GM12878 (cell line): ENCODE measurements at regions of chr6 and their contacts with region 1.

Region 1: GRCh38 chr6:34315780-34316179 is 67.0 kb upstream of the SMIM29 start:
- DNase-seq: peak; percentile 71
- ATAC-seq: peak; percentile 81
- H3K4me3 ChIP-seq: peak overlapping the region; percentile 37
- H3K27ac ChIP-seq: peak overlapping the region; percentile 84
- H3K4me1 ChIP-seq: peaks cover 43% of the 10 kb centered on the region
- H3K27me3 ChIP-seq: no peaks in the 10 kb centered on the region
- CTCF ChIP-seq: no peak
- EP300 ChIP-seq: peak; percentile 37 to 54; a peak in 2 of 4 replicates
- POLR2A ChIP-seq: no peak
- RAD21 ChIP-seq: no peak

Region 2: DNA sequence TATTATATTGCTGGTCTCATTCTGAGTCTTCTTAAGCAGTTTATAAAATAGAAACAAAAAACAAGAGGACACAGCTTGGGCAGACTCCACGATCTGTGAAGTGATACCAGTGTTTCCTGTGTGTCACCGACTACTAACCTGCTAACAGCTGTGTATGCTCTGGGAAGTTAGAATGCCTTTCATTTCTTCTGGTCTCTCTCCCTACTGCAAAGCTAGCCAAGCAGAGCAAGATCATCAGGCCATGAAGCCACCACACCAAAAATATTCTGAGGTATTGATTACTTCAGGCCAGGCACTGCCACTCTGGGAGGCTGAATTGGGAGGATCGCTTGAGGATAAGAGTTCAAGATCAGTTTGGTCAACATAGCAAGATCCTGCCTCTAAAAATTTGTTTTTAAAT is 20.1 kb before region 1 on chr6:
- CTCF ChIA-PET with region 1: interaction called, 16 read pairs
- POLR2A ChIA-PET with region 1: interaction called, 8 read pairs
- RAD21 ChIA-PET with region 1: interaction called, 9 read pairs
- SMC1A ChIA-PET with region 1: interaction called, 19 read pairs
- in situ Hi-C with region 1: no loop called
- intact Hi-C with region 1: no loop called
- DNase-seq: peak; percentile 95
- ATAC-seq: peak; percentile 95
- H3K4me3 ChIP-seq: 0 out of 2 replicates have a peak overlapping the region, but pooled peaks have one; percentile 4
- H3K27ac ChIP-seq: peak overlapping the region; percentile 76
- H3K4me1 ChIP-seq: peaks cover 40% of the 10 kb centered on the region
- H3K27me3 ChIP-seq: no peaks in the 10 kb centered on the region
- CTCF ChIP-seq: no peak
- EP300 ChIP-seq: no peak
- POLR2A ChIP-seq: no peak
- RAD21 ChIP-seq: no peak

Region 3: GRCh38 chr6:34301408-34301807 is 14.4 kb before region 1 on chr6:
- CTCF ChIA-PET with region 1: interaction called, 16 read pairs
- POLR2A ChIA-PET with region 1: interaction called, 8 read pairs
- RAD21 ChIA-PET with region 1: interaction called, 9 read pairs
- SMC1A ChIA-PET with region 1: interaction called, 26 read pairs
- in situ Hi-C with region 1: no loop called
- intact Hi-C with region 1: no loop called
- DNase-seq: no peak
- ATAC-seq: no peak
- H3K4me3 ChIP-seq: no peak overlapping the region
- H3K27ac ChIP-seq: peak overlapping the region; percentile 49; the same call in 1 of the 2 replicates
- H3K4me1 ChIP-seq: peaks cover 39% of the 10 kb centered on the region
- H3K27me3 ChIP-seq: no peaks in the 10 kb centered on the region
- CTCF ChIP-seq: no peak
- EP300 ChIP-seq: no peak
- POLR2A ChIP-seq: no peak
- RAD21 ChIP-seq: no peak

Region 4: GRCh38 chr6:34332251-34333198 is 16.7 kb after region 1 on chr6:
- CTCF ChIA-PET with region 1: interaction called, 6 read pairs
- POLR2A ChIA-PET with region 1: interaction called, 8 read pairs
- RAD21 ChIA-PET with region 1: interaction called, 8 read pairs
- SMC1A ChIA-PET with region 1: interaction called, 12 read pairs
- in situ Hi-C with region 1: no loop called
- intact Hi-C with region 1: no loop called
- DNase-seq: no peak
- ATAC-seq: peak; percentile 81
- H3K4me3 ChIP-seq: no peak overlapping the region
- H3K27ac ChIP-seq: peak overlapping the region; percentile 65
- H3K4me1 ChIP-seq: peaks cover 26% of the 10 kb centered on the region
- H3K27me3 ChIP-seq: no peaks in the 10 kb centered on the region
- CTCF ChIP-seq: no peak
- EP300 ChIP-seq: no peak
- POLR2A ChIP-seq: no peak
- RAD21 ChIP-seq: no peak

Region 5: DNA sequence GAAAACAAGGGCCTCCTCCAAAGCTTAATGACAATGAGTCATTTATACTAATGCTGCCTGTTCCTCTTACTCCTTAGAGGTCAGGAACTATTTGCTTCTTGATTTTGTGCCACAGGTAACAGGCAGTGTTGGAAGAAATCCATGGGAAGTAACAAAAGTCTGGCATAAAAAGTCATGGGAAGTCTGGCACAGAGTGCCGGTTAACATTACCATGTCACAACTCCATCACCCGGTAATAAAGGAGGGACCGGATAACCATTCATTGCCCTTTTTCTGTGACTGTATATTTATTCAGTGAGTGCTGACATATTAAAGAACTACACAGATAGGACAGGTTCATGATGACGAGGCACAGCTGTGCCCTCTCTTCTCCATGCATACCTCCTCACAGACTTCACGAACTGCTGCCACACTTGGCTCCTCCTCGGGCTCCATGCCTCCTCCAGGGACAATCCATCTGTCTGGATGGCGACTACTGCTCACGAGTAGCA is 25.7 kb after region 1 on chr6:
- CTCF ChIA-PET with region 1: interaction called, 4 read pairs
- POLR2A ChIA-PET with region 1: interaction called, 8 read pairs
- RAD21 ChIA-PET with region 1: interaction called, 4 read pairs
- SMC1A ChIA-PET with region 1: interaction called, 12 read pairs
- in situ Hi-C with region 1: no loop called
- intact Hi-C with region 1: no loop called
- DNase-seq: no peak
- ATAC-seq: no peak
- H3K4me3 ChIP-seq: no peak overlapping the region
- H3K27ac ChIP-seq: no peak overlapping the region
- H3K4me1 ChIP-seq: peaks cover 18% of the 10 kb centered on the region
- H3K27me3 ChIP-seq: no peaks in the 10 kb centered on the region
- CTCF ChIP-seq: no peak
- EP300 ChIP-seq: no peak
- POLR2A ChIP-seq: no peak
- RAD21 ChIP-seq: no peak

Region 6: GRCh38 chr6:34350137-34350933 is 34.6 kb after region 1 on chr6:
- CTCF ChIA-PET with region 1: interaction called, 3 read pairs
- POLR2A ChIA-PET with region 1: interaction called, 3 read pairs
- RAD21 ChIA-PET with region 1: no interaction called
- SMC1A ChIA-PET with region 1: interaction called, 10 read pairs
- in situ Hi-C with region 1: no loop called
- intact Hi-C with region 1: no loop called
- DNase-seq: no peak
- ATAC-seq: no peak
- H3K4me3 ChIP-seq: no peak overlapping the region
- H3K27ac ChIP-seq: no peak overlapping the region
- H3K4me1 ChIP-seq: peaks cover 15% of the 10 kb centered on the region
- H3K27me3 ChIP-seq: no peaks in the 10 kb centered on the region
- CTCF ChIP-seq: no peak
- EP300 ChIP-seq: no peak
- POLR2A ChIP-seq: no peak
- RAD21 ChIP-seq: no peak

Region 7: GRCh38 chr6:34392497-34393190 is 76.9 kb after region 1 on chr6 and contains the start of gene NUDT3:
- CTCF ChIA-PET with region 1: interaction called, 9 read pairs
- POLR2A ChIA-PET with region 1: interaction called, 4 read pairs
- RAD21 ChIA-PET with region 1: interaction called, 23 read pairs
- SMC1A ChIA-PET with region 1: interaction called, 7 read pairs
- in situ Hi-C with region 1: no loop called
- intact Hi-C with region 1: loop called (anchors 2 kb)
- DNase-seq: peak; percentile 83
- ATAC-seq: peak; percentile 90
- H3K4me3 ChIP-seq: peak within 1 kb of the TSS; percentile 99
- H3K27ac ChIP-seq: peak within 1 kb of the TSS; percentile 75
- H3K4me1 ChIP-seq: peaks cover 3% of the 10 kb centered on the region
- H3K27me3 ChIP-seq: no peaks in the 10 kb centered on the region
- CTCF ChIP-seq: peak; percentile 90 to 93 (median 90)
- EP300 ChIP-seq: no peak
- POLR2A ChIP-seq: peak; percentile 95
- RAD21 ChIP-seq: peak; percentile 64
- polyA plus RNA-seq, gene NUDT3: 2.4 to 23.6 TPM

Region 8: DNA sequence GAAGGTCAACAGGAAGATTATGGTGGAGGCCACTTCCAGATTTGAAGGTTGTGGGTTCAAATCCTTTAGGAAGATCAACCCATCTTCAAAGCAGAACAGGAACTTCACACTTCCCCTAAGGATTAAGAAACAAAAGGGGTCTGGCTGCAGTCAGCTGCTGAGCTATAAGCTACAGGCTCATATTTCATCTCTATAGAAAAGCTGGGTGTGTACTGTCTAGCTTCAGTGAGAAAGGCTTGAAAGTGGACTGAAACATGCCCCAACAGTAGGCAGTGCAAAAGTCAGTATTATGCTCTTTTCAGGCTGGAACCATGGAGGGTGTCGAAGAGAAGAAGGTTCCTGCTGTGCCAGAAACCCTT is 300.4 kb after region 1 on chr6:
- CTCF ChIA-PET with region 1: no interaction called
- POLR2A ChIA-PET with region 1: no interaction called
- RAD21 ChIA-PET with region 1: no interaction called
- SMC1A ChIA-PET with region 1: no interaction called
- in situ Hi-C with region 1: no loop called
- intact Hi-C with region 1: no loop called
- DNase-seq: no peak
- ATAC-seq: no peak
- H3K4me3 ChIP-seq: no peak overlapping the region
- H3K27ac ChIP-seq: no peak overlapping the region
- H3K4me1 ChIP-seq: no peaks in the 10 kb centered on the region
- H3K27me3 ChIP-seq: no peaks in the 10 kb centered on the region
- CTCF ChIP-seq: no peak
- EP300 ChIP-seq: no peak
- POLR2A ChIP-seq: no peak
- RAD21 ChIP-seq: no peak